Prostate gland (tissue), 2 donors: ENCODE measurements at regions of chr11 and their contacts with region 1.

Region 1: GRCh38 chr11:118870396-118871345 is 13.0 kb upstream of the CXCR5 start:
- DNase-seq: peak; percentile 41
- H3K4me3 ChIP-seq: peak overlapping the region; percentile 9 to 20
- H3K27ac ChIP-seq: peak overlapping the region; percentile 96 to 99
- H3K4me1 ChIP-seq: peaks cover 8% of the 10 kb centered on the region
- H3K27me3 ChIP-seq: no peaks in the 10 kb centered on the region
- CTCF ChIP-seq: peak in 1 of 4 experiments; percentile 26
- POLR2A ChIP-seq: no peak

Region 2: DNA sequence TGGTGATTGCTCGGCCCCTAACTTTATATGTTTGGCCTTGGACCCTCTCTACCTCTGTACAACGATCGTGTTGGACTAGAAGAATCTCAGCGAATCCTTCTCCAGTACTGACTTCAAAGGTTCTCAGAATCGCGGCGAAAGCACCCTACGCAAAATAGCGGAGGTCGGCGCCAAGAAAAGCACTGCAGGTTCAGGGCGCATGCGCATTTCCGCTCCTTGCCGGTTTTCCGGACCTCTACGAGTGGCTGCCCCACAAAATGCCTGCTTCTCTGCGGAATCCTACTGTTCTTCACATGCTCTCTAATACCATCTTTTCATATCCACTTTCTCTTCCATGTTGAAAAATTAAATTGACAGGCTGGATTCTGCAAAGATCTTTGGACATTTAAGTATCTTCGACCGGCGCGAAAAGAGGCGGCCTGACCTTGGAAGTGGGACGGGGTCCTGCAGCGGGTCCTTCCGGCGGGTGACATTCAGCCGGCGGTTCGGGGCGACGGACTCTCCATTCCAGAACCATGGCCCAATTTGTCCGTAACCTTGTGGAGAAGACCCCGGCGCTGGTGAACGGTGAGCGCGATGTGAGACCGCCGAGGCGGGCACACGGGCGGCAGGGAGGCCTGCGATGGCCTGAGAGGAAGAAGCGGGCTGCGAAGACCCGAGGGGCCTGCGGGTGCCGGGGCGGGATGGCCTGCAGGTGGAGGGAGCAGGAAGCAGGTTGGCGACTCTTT is 469.4 kb before region 1 on chr11 and contains the start of gene ATP5MG:
- intact Hi-C with region 1: no loop called
- DNase-seq: peak; percentile 81
- H3K4me3 ChIP-seq: peak within 1 kb of the TSS; percentile 65 to 83
- H3K27ac ChIP-seq: peak within 1 kb of the TSS; percentile 85 to 88
- H3K4me1 ChIP-seq: peaks cover 8% of the 10 kb centered on the region
- H3K27me3 ChIP-seq: no peaks in the 10 kb centered on the region
- CTCF ChIP-seq: no peak
- POLR2A ChIP-seq: peak; percentile 5
- total RNA-seq, gene ATP5MG: 32.9 to 66.4 TPM

Region 3: GRCh38 chr11:118883368-118884071 is 12.8 kb after region 1 on chr11 and contains the start of gene CXCR5:
- intact Hi-C with region 1: loop called (anchors 1 kb)
- DNase-seq: no peak
- H3K4me3 ChIP-seq: no peak within 1 kb of the TSS
- H3K27ac ChIP-seq: no peak within 1 kb of the TSS
- H3K4me1 ChIP-seq: no peaks in the 10 kb centered on the region
- H3K27me3 ChIP-seq: no peaks in the 10 kb centered on the region
- CTCF ChIP-seq: no peak
- POLR2A ChIP-seq: no peak
- total RNA-seq, gene CXCR5: 0.17 TPM in 1 of 2 donors, not detected in the other